ENCODE measurements at regions of chr2 and their contacts with region 1.

Region 1: GRCh38 chr2:75608684-75609333 is 37.8 kb upstream of the MRPL19 start:
- DNase-seq: no peak
- H3K4me3 ChIP-seq: peak overlapping the region; percentile 40
- CTCF ChIP-seq: peak; percentile 95

Region 2: GRCh38 chr2:75480971-75481836 is 127.6 kb before region 1 on chr2:
- CTCF ChIA-PET with region 1: interaction called, 78 read pairs
- POLR2A ChIA-PET with region 1: interaction called, 4 read pairs
- DNase-seq: no peak
- H3K4me3 ChIP-seq: no peak overlapping the region
- CTCF ChIP-seq: peak; percentile 35

Region 3: DNA sequence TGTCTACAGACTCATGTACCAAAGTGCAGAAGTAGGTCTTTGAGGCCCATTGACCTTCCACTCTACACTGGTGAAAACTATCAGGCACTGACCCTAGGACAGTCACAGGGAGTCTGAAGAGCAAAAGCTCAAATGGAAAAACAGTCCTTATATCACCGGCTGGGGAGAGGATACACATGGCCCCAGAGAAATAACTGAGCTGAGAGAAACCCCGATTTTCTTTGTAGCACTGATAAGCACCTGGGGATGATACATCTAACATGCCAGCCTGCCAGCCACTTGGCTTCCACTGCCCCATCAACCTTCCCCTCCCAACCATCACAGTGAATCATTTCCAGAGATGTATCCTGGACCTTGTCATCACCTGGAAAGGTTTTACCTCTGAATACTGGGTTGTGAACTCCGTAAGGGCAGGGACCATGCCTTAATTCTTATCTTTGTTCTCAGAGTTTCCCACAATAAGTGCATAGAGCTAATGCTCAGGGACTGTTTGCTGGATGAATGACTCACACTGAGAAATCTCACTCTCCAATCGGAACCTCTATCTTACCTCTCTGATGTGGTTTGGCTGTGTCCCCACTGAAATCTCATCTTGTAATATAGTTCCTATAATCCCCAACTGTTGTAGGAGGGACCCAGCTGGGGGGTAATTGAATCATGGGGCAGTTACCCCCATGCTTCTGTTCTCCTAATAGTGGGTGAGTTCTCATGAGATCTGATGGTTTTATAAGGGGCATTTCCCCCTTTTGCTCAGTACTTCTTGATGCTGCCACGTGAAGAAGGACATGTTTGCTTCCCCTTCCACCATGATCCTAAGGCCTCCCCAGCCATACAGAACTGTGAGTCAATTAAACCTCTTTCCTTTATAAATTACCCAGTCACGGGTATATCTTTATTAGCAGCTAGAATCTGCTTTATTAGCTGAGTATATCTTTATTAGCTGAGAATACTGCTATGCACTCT is 85.2 kb before region 1 on chr2:
- CTCF ChIA-PET with region 1: interaction called, 72 read pairs
- POLR2A ChIA-PET with region 1: interaction called, 3 read pairs
- DNase-seq: no peak
- H3K4me3 ChIP-seq: no peak overlapping the region
- CTCF ChIP-seq: no peak

Region 4: DNA sequence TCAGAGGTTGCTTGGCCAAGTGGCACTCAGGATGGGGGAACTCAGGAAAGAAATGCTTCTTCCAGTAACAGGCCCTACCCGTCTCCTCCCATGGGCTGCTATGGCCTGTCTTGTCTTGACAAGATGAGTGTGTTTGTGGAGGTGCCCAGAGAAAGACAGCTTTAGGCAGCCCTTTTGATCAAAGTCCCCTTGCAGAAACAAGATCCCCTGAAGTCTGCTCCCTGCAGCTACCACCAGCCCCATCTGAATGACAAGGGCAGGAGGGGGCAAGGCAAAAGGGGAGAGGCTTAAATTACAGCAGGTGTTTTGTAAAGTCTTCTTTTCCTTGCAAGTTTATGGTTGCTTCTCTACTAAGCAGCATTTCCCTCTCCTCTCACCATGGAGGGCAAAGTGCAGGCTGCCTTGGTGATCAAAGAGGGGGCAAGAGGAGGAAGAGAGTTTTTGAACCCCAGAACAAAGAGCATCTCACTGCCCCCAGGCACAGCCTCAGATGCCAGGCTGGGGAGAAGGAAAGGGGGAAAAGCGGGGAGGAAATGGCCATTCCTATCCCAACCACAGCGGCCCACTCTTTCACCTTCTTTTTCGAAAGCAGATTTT is 54.8 kb before region 1 on chr2:
- CTCF ChIA-PET with region 1: interaction called, 104 read pairs
- POLR2A ChIA-PET with region 1: interaction called, 53 read pairs
- DNase-seq: no peak
- H3K4me3 ChIP-seq: no peak overlapping the region
- CTCF ChIP-seq: no peak

Region 5: DNA sequence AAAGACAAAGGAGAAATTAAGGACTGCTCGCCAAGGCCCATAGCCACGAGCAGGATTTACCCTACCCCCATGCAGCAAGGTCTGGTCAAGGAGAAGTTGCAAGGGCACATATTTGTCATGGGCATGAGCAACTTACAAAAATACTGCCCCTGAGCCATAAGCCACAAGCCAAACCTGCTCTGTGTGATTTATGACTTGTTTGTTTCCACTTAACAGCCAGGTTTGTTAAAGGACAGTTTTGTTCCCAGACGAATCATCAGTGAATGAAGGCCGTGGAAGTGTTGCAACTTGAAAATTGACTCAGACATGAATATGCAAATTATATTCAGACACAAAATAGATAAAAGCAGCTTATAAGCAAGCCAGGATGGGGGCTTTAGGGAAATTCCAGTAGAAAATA is 16.8 kb before region 1 on chr2:
- CTCF ChIA-PET with region 1: interaction called, 31 read pairs
- POLR2A ChIA-PET with region 1: interaction called, 61 read pairs
- DNase-seq: no peak
- H3K4me3 ChIP-seq: no peak overlapping the region
- CTCF ChIP-seq: no peak

Region 6: GRCh38 chr2:75640621-75641121 is 31.9 kb after region 1 on chr2:
- CTCF ChIA-PET with region 1: interaction called, 69 read pairs
- POLR2A ChIA-PET with region 1: no interaction called
- DNase-seq: no peak
- H3K4me3 ChIP-seq: no peak overlapping the region
- CTCF ChIP-seq: peak; percentile 97

Region 7: GRCh38 chr2:75853441-75853840 is 244.6 kb after region 1 on chr2:
- CTCF ChIA-PET with region 1: no interaction called
- POLR2A ChIA-PET with region 1: no interaction called
- DNase-seq: no peak
- H3K4me3 ChIP-seq: no peak overlapping the region
- CTCF ChIP-seq: no peak